ENCODE measurements at regions of chr19 and their contacts with region 1.

Region 1: DNA sequence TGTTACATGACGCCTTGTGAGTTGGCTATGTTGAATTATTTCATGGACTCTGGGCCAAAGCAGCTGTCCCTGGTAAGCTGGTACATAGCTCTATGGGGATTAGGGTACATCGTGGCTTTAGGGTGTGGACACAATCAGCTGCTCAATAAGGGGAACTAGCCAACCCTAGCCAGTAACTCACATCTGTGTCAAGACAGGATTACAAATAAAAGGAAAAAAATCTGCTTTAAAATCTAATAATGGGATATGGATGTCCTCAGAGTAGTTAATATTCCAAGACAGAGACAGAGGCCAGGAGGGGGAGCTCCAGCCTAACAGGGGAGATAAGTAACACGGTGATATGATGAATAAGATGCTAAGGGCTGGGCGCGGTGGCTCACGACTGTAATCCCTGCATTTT is 21.1 kb upstream of the ZNF766 start:
- DNase-seq: peak; percentile 24 to 75 (median 54)
- ATAC-seq: peak; percentile 57 to 83 (median 74)
- H3K4me3 ChIP-seq: no peak overlapping the region
- H3K4me3 Mint-ChIP-seq: no peak overlapping the region
- H3K27ac ChIP-seq: no peak overlapping the region
- H3K27ac Mint-ChIP-seq: no peak overlapping the region
- H3K4me1 ChIP-seq: no peaks in the 10 kb centered on the region
- H3K4me1 Mint-ChIP-seq: no peaks in the 10 kb centered on the region
- H3K27me3 ChIP-seq: no peaks in the 10 kb centered on the region
- H3K27me3 Mint-ChIP-seq: no peaks in the 10 kb centered on the region

Region 2: DNA sequence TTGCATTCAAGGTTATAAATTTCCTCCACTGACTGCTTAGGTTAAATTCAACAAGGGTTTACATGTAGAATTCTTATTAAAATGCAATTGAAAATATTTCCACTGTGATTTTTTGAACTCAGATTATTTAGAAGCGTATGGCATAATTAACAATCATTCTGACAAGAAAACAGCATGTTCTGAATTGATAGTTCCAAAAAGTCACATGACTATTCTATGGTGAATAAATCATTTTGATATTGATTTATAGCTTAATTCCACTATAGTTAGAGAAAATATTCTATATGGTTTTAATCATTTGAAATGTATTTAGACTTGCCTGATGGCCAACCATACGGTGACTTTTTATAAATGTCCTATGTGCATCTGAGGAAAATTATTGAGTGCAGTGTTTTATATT is 363.5 kb before region 1 on chr19:
- CTCF ChIA-PET with region 1: interaction called in 1 of 2 experiments, 10 read pairs
- POLR2A ChIA-PET with region 1: no interaction called
- DNase-seq: no peak
- ATAC-seq: no peak
- H3K4me3 ChIP-seq: no peak overlapping the region
- H3K4me3 Mint-ChIP-seq: no peak overlapping the region
- H3K27ac ChIP-seq: no peak overlapping the region
- H3K27ac Mint-ChIP-seq: no peak overlapping the region
- H3K4me1 ChIP-seq: peaks cover 4 to 9% of the 10 kb centered on the region in 2 experiments
- H3K4me1 Mint-ChIP-seq: peaks cover 0 to 7% (median 2%) of the 10 kb centered on the region in 3 donors
- H3K27me3 ChIP-seq: no peaks in the 10 kb centered on the region
- H3K27me3 Mint-ChIP-seq: no peaks in the 10 kb centered on the region

Region 3: GRCh38 chr19:52189735-52190486 is 58.3 kb before region 1 on chr19 and contains the start of gene PPP2R1A:
- CTCF ChIA-PET with region 1: no interaction called
- POLR2A ChIA-PET with region 1: no interaction called
- DNase-seq: peak; percentile 87 to 100 (median 99)
- ATAC-seq: peak; percentile 85 to 89 (median 88)
- H3K4me3 ChIP-seq: peak within 1 kb of the TSS; percentile 90 to 91
- H3K4me3 Mint-ChIP-seq: peak within 1 kb of the TSS; percentile 97 to 98 (median 97)
- H3K27ac ChIP-seq: peak within 1 kb of the TSS; percentile 96
- H3K27ac Mint-ChIP-seq: peak within 1 kb of the TSS; percentile 100
- H3K4me1 ChIP-seq: peaks cover 12 to 52% of the 10 kb centered on the region in 2 experiments
- H3K4me1 Mint-ChIP-seq: peaks cover 45 to 56% (median 51%) of the 10 kb centered on the region in 3 donors
- H3K27me3 ChIP-seq: no peaks in the 10 kb centered on the region
- H3K27me3 Mint-ChIP-seq: no peaks in the 10 kb centered on the region
- total RNA-seq, gene PPP2R1A: 177 to 203 (median 191) TPM

Region 4: DNA sequence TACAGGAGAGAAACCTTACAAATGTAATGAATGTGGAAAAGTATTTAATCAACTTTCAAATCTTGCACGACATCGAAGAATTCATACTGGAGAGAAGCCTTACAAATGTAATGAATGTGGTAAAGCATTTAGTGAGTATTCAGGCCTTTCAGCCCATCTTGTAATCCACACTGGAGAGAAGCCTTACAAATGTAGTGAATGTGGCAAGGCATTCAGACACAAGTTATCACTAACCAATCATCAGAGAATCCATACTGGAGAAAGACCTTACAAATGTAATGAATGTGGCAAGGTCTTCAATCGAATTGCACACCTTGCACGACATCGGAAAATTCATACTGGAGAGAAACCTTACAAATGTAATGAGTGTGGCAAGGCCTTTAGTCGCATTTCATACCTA is 74.2 kb after region 1 on chr19:
- CTCF ChIA-PET with region 1: no interaction called
- POLR2A ChIA-PET with region 1: no interaction called
- DNase-seq: no peak
- ATAC-seq: no peak
- H3K4me3 ChIP-seq: no peak overlapping the region
- H3K4me3 Mint-ChIP-seq: no peak overlapping the region
- H3K27ac ChIP-seq: no peak overlapping the region
- H3K27ac Mint-ChIP-seq: no peak overlapping the region
- H3K4me1 ChIP-seq: no peaks in the 10 kb centered on the region
- H3K4me1 Mint-ChIP-seq: peaks cover 0 to 2% (median 0%) of the 10 kb centered on the region in 3 donors
- H3K27me3 ChIP-seq: no peaks in the 10 kb centered on the region
- H3K27me3 Mint-ChIP-seq: no peaks in the 10 kb centered on the region